CD8-positive, alpha-beta T cell (primary cell): ENCODE measurements at regions of chr5 and their contacts with region 1.

Region 1: DNA sequence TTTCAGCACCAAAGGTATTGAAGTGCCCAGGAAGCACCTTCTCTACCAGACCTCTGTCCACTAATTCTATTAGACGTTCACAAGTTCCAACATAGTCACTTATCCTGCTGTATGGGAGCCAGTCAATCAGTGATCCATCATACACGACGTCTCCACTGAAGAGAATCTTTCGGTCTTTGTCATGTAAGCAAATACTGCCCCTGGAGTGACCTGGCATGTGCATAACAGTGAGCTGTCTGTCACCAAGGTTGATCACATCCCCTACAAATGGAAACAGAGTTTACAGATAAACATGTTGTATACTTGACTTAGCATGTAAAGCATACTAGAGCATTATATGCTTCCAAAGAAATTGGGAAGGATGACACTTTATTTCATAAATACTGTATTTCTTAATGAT is 13.3 kb downstream of the MBLAC2 start:
- DNase-seq: no peak
- ATAC-seq: no peak
- H3K4me3 ChIP-seq: no peak overlapping the region
- H3K4me3 Mint-ChIP-seq: no peak overlapping the region
- H3K27ac ChIP-seq: no peak overlapping the region
- H3K27ac Mint-ChIP-seq: no peak overlapping the region
- H3K4me1 ChIP-seq: no peaks in the 10 kb centered on the region
- H3K4me1 Mint-ChIP-seq: peaks cover 13% of the 10 kb centered on the region
- H3K27me3 ChIP-seq: no peaks in the 10 kb centered on the region
- H3K27me3 Mint-ChIP-seq: no peaks in the 10 kb centered on the region
- CTCF ChIP-seq: no peak

Region 2: GRCh38 chr5:90495146-90495545 is 33.9 kb after region 1 on chr5:
- CTCF ChIA-PET with region 1: no interaction called
- POLR2A ChIA-PET with region 1: no interaction called
- intact Hi-C with region 1: loop called in 1 of 2 experiments (anchors 5 kb)
- DNase-seq: no peak
- ATAC-seq: no peak
- H3K4me3 ChIP-seq: no peak overlapping the region
- H3K4me3 Mint-ChIP-seq: no peak overlapping the region
- H3K27ac ChIP-seq: no peak overlapping the region
- H3K27ac Mint-ChIP-seq: no peak overlapping the region
- H3K4me1 ChIP-seq: no peaks in the 10 kb centered on the region
- H3K4me1 Mint-ChIP-seq: no peaks in the 10 kb centered on the region
- H3K27me3 ChIP-seq: no peaks in the 10 kb centered on the region
- H3K27me3 Mint-ChIP-seq: no peaks in the 10 kb centered on the region
- CTCF ChIP-seq: no peak